Calu3 (cell line): ENCODE measurements at regions of chr16 and their contacts with region 1.

Region 1: DNA sequence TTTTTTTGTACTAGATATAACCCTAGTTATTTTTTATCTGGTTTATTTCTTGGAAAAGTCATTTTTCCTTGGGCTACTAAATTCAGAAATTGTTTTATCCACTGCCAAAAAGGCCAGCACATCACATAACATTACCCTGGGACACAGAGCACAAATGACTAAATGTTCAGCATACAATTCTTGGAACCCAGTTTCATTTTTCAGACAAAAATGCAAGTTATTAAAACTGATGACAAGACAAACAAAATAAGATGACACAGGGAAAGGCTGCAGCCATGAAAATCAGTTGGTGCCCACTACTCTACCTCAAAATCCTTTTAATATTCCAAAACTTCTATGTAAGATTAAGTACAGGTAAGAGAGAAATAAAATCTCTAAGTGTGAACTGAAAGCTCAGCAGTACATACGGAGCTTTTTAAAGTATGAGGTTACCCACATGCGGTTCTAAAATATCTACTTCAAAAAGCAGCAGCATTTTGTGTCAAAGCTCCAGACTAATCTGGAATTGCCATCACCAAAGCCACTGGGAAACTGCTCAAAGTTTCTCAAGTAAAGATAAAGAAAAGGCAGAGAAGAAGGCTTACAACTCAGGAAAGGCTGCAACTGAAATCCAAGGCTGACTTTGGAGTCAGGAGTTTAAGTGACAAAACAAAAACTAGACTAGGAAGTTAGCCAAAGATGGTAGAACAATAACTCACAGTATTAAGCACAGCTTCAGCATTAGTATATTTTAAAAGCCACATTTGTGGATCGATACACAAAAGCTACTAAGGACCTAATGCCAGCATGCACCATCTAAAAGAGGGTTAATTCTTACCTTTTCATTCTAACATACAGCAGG is 41.4 kb downstream of the AP1G1 start:
- DNase-seq: no peak
- H3K4me3 Mint-ChIP-seq: no peak overlapping the region
- H3K27ac Mint-ChIP-seq: peak overlapping the region; percentile 36
- H3K4me1 Mint-ChIP-seq: peaks cover 16% of the 10 kb centered on the region
- H3K27me3 Mint-ChIP-seq: no peaks in the 10 kb centered on the region
- CTCF ChIP-seq: no peak

Region 2: GRCh38 chr16:71784093-71784492 is 16.8 kb after region 1 on chr16:
- CTCF ChIA-PET with region 1: no interaction called
- intact Hi-C with region 1: loop called (anchors 2 kb)
- DNase-seq: no peak
- H3K4me3 Mint-ChIP-seq: no peak overlapping the region
- H3K27ac Mint-ChIP-seq: peak overlapping the region; percentile 35
- H3K4me1 Mint-ChIP-seq: peaks cover 23% of the 10 kb centered on the region
- H3K27me3 Mint-ChIP-seq: no peaks in the 10 kb centered on the region
- CTCF ChIP-seq: no peak

Region 3: GRCh38 chr16:71808593-71809459 is 41.5 kb after region 1 on chr16 and contains the start of gene AP1G1:
- CTCF ChIA-PET with region 1: no interaction called
- intact Hi-C with region 1: loop called (anchors 5 kb)
- DNase-seq: peak; percentile 95
- H3K4me3 Mint-ChIP-seq: peak within 1 kb of the TSS; percentile 90
- H3K27ac Mint-ChIP-seq: peak within 1 kb of the TSS; percentile 97
- H3K4me1 Mint-ChIP-seq: no peaks in the 10 kb centered on the region
- H3K27me3 Mint-ChIP-seq: no peaks in the 10 kb centered on the region
- CTCF ChIP-seq: no peak
- total RNA-seq, gene AP1G1: 144 and 152 TPM in 2 replicates